ENCODE measurements at regions of chr2 and their contacts with region 1.

Region 1: DNA sequence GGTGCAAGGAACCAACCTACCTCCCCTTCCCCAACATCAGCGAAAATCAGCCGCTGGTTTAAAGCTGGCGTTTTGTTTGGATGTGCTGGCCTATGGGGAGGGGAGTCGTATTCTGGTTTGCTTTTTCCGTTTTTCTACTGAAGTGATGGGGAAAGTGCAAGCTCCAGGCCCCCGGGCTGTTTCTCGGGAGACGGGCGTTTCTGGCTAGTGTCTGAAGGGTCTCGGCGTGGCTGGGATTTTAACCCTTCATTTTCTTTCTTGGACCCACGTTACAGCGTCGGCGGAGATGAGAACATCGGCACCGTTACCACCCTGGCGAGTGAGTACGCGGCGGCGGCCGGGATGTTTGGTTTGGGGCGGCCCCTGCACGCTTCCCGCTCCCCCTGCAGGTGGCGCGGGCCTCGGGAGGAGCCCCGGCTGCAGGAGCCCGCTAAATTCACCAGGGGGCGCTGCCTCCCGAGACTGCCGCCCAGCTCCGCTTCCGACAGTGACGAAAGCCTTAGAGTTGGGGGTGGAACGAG is 70.7 kb downstream of the PLB1 start:
- DNase-seq: peak; percentile 87
- H3K4me3 ChIP-seq: peak overlapping the region; percentile 33
- H3K27ac ChIP-seq: no peak overlapping the region
- H3K4me1 ChIP-seq: no peaks in the 10 kb centered on the region
- H3K27me3 ChIP-seq: no peaks in the 10 kb centered on the region
- CTCF ChIP-seq: peak; percentile 99

Region 2: GRCh38 chr2:28047681-28048080 is 518.9 kb before region 1 on chr2:
- intact Hi-C with region 1: no loop called
- DNase-seq: no peak
- H3K4me3 ChIP-seq: no peak overlapping the region
- H3K27ac ChIP-seq: no peak overlapping the region
- H3K4me1 ChIP-seq: no peaks in the 10 kb centered on the region
- H3K27me3 ChIP-seq: no peaks in the 10 kb centered on the region
- CTCF ChIP-seq: no peak

Region 3: DNA sequence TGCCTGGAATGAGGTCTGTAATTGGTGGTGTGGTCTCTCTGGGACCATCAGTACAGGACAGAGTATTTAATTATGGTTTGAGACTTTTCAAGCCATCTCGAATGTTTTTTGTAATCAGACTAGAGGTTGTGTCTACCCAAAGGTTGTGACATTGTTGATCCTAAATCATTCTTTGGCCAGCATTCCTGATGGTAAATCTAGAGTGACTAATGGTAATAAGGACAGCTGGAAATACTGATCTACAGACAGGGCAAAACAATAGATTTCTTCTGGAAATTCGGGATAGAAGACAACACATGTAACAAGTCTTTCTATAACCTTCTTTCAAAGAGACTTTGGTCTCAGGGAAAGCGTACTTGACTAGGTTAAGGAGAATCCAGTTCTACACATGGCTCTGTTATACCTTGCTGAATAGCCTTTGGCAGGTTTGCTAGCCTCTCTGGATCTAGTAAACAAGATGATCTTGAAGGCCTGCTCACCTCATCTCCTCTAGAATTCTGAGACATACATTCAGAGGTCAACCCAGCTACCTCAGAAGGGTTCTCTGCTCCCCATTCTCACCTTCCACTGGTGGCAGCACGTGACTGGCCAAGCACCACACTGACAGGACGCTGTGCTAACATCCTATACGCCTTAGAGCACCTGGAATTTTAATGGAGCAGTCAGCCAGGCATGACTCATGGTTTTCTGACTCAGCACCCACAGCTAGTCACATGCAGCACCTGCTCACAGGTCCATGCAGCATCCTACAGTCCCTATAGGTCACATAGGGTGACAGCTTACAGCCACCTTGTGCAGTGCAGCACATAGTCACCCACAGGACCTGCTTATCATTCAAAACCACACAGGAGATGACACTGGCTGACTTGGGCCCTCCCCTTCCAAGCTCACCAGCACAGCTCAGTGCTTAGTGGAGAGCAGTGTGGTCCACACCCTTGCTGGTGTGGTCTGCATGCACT is 58.5 kb before region 1 on chr2:
- intact Hi-C with region 1: no loop called
- DNase-seq: peak; percentile 47
- H3K4me3 ChIP-seq: no peak overlapping the region
- H3K27ac ChIP-seq: no peak overlapping the region
- H3K4me1 ChIP-seq: no peaks in the 10 kb centered on the region
- H3K27me3 ChIP-seq: no peaks in the 10 kb centered on the region
- CTCF ChIP-seq: no peak

Region 4: GRCh38 chr2:29009711-29010564 is 443.4 kb after region 1 on chr2:
- intact Hi-C with region 1: loop called (anchors 5 kb)
- DNase-seq: no peak
- H3K4me3 ChIP-seq: no peak overlapping the region
- H3K27ac ChIP-seq: peak overlapping the region; percentile 0
- H3K4me1 ChIP-seq: no peaks in the 10 kb centered on the region
- H3K27me3 ChIP-seq: no peaks in the 10 kb centered on the region
- CTCF ChIP-seq: no peak

Region 5: DNA sequence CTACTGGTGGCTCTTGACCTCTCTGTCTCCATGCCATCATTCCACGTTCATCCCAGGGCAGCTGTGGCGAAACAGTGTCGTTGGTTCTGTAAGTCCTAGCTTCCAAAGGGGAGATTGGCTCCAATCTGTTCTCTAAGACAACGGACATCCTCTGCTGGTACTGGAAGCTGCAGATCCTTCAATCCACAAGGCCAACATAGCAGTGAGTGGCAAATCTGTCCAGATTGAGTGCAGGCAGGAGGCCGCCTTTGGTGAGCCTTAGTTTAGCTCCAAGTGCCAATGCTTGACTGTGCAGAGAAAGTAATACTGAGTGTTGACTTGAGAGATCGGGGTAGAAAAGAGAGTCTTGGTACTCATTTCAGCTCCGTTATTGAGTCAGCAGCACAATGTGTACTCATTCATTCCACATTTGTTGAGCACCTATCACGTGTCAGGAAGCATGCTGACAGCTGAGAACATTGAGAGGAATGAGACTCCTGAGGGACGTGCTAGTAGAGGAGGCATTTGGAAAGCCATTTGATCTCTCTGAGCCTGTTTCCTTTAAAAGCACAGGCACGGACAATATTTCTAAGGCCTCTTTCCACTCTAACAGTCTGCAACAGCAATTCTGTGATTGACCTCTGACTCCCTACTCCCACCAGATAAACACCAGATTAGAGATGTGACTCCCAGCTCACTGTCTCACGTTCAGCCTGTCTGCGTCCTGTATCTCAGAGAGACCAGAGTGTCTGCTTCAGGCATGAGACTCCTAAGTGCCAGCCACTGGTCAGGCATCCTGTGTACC is 854.6 kb after region 1 on chr2:
- intact Hi-C with region 1: no loop called
- DNase-seq: no peak
- H3K4me3 ChIP-seq: no peak overlapping the region
- H3K27ac ChIP-seq: no peak overlapping the region
- H3K4me1 ChIP-seq: no peaks in the 10 kb centered on the region
- H3K27me3 ChIP-seq: no peaks in the 10 kb centered on the region
- CTCF ChIP-seq: no peak

Measured in colonic mucosa (tissue), 4 donors.